Endothelial cell of umbilical vein (primary cell): ENCODE measurements at regions of chr13 and their contacts with region 1.

Region 1: GRCh38 chr13:65656740-65657329 is 1573.3 kb downstream of the PCDH9 start:
- DNase-seq: peak; percentile 30
- H3K4me3 ChIP-seq: no peak overlapping the region
- H3K27ac ChIP-seq: no peak overlapping the region
- H3K4me1 ChIP-seq: no peaks in the 10 kb centered on the region
- H3K27me3 ChIP-seq: no peaks in the 10 kb centered on the region
- CTCF ChIP-seq: peak; percentile 21 to 27
- POLR2A ChIP-seq: no peak

Region 2: DNA sequence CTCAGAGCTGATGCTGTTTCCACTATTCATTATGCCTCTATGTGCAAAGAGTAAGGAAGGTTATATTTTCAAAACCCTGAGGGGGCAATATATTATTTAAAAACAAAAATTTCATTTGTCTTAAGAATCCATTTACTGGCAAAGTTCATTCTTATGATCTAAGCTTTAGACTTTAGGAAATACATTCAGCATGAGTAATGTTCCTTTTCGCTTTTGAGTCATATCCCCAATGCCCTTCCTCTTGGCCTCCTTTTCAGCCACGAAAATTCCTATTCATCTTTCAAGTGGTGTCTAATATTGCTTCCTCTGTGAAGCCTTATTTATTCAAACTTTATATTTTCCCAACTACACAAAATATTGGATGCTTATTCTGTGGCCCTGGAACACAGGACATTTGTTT is 256.3 kb after region 1 on chr13:
- CTCF ChIA-PET with region 1: interaction called, 7 read pairs
- POLR2A ChIA-PET with region 1: no interaction called
- dilution Hi-C with region 1: no loop called
- intact Hi-C with region 1: loop called (anchors 5 kb)
- DNase-seq: peak; percentile 94
- H3K4me3 ChIP-seq: peak overlapping the region in 1 of 3 experiments; percentile 31
- H3K27ac ChIP-seq: peak overlapping the region; percentile 99
- H3K4me1 ChIP-seq: peaks cover 38% of the 10 kb centered on the region
- H3K27me3 ChIP-seq: no peaks in the 10 kb centered on the region
- CTCF ChIP-seq: no peak
- POLR2A ChIP-seq: peak; percentile 54

Region 3: DNA sequence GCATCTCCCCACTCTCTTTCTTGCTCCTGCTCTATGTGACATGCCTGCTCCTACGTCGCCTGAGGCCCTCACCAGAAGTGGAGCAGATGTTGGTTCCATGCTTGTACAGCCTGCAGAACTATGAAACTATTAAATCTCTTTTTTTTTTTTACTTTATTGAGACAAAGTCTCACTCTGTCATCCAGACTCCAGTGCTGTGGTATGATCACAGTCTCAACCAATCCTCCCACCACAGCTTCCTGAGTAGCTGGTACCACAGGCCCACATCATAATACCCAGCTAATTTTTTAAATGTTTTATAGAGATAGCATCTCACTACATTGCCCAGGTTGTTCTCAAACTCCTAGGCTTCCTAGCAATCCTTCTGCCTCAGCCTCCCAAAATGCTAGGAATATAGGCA is 505.6 kb after region 1 on chr13:
- CTCF ChIA-PET with region 1: no interaction called
- POLR2A ChIA-PET with region 1: no interaction called
- dilution Hi-C with region 1: no loop called
- intact Hi-C with region 1: loop called (anchors 10 kb)
- DNase-seq: no peak
- H3K4me3 ChIP-seq: no peak overlapping the region
- H3K27ac ChIP-seq: no peak overlapping the region
- H3K4me1 ChIP-seq: no peaks in the 10 kb centered on the region
- H3K27me3 ChIP-seq: no peaks in the 10 kb centered on the region
- CTCF ChIP-seq: no peak
- POLR2A ChIP-seq: no peak

Region 4: GRCh38 chr13:66994097-66994496 is 1337.3 kb after region 1 on chr13:
- CTCF ChIA-PET with region 1: interaction called, 14 read pairs
- POLR2A ChIA-PET with region 1: no interaction called
- dilution Hi-C with region 1: no loop called
- intact Hi-C with region 1: no loop called
- DNase-seq: peak; percentile 81
- H3K4me3 ChIP-seq: peak overlapping the region; percentile 17 to 65 (median 53)
- H3K27ac ChIP-seq: no peak overlapping the region
- H3K4me1 ChIP-seq: peaks cover 16% of the 10 kb centered on the region
- H3K27me3 ChIP-seq: no peaks in the 10 kb centered on the region
- CTCF ChIP-seq: peak; percentile 54 to 79
- POLR2A ChIP-seq: no peak

Region 5: GRCh38 chr13:67238277-67238859 is 1581.5 kb after region 1 on chr13:
- CTCF ChIA-PET with region 1: interaction called, 15 read pairs
- POLR2A ChIA-PET with region 1: no interaction called
- dilution Hi-C with region 1: no loop called
- intact Hi-C with region 1: no loop called
- DNase-seq: peak; percentile 48
- H3K4me3 ChIP-seq: no peak overlapping the region
- H3K27ac ChIP-seq: no peak overlapping the region
- H3K4me1 ChIP-seq: no peaks in the 10 kb centered on the region
- H3K27me3 ChIP-seq: no peaks in the 10 kb centered on the region
- CTCF ChIP-seq: peak; percentile 22 to 33
- POLR2A ChIP-seq: no peak